ENCODE measurements at regions of chr9 and their contacts with region 1.

Region 1: DNA sequence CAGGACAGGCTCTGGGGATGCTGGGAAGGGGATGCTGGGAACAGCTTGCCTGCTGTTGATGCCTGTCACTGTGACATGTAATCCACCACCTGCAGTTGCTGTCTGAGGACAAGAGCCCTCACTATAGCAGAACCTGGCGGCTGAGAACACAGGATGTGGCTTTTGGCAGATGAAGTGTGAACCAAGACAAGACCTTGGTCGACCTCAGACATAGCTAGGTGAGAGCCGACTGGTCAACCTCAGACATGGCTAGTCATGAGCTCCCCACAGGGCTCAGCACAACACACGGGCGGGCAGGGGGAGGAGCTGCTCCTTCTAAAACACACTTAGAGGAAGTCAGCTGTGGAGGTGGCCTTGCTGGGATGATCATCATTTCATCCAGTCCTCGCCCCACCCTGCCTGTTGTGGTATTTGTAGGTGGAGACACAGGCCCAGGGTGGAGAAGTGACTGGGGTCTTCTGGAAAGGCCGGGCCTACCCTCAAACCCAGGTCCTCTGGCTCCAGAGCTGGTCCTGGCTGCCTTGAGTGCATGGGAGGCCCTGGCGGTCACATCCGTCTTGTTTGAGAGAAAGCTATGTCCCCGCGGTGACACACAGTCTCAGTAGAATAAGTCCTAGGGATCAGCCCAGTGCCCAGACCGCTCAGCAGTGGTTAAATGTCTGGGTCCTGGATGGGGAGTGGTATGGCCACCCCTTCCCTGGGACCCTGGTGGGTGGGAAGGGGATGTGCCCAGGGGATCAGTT is 6.1 kb downstream of the SUSD3 start:
- DNase-seq: peak; percentile 74 to 97 (median 86)
- ATAC-seq: peak; percentile 87
- H3K4me3 ChIP-seq: peak overlapping the region; percentile 45
- H3K4me3 Mint-ChIP-seq: peak overlapping the region; percentile 91
- H3K27ac ChIP-seq: peak overlapping the region; percentile 83 to 90
- H3K27ac Mint-ChIP-seq: peak overlapping the region; percentile 100
- H3K4me1 ChIP-seq: peaks cover 80% of the 10 kb centered on the region
- H3K4me1 Mint-ChIP-seq: peaks cover 96% of the 10 kb centered on the region
- H3K27me3 ChIP-seq: no peaks in the 10 kb centered on the region
- H3K27me3 Mint-ChIP-seq: no peaks in the 10 kb centered on the region
- CTCF ChIP-seq: no peak

Region 2: DNA sequence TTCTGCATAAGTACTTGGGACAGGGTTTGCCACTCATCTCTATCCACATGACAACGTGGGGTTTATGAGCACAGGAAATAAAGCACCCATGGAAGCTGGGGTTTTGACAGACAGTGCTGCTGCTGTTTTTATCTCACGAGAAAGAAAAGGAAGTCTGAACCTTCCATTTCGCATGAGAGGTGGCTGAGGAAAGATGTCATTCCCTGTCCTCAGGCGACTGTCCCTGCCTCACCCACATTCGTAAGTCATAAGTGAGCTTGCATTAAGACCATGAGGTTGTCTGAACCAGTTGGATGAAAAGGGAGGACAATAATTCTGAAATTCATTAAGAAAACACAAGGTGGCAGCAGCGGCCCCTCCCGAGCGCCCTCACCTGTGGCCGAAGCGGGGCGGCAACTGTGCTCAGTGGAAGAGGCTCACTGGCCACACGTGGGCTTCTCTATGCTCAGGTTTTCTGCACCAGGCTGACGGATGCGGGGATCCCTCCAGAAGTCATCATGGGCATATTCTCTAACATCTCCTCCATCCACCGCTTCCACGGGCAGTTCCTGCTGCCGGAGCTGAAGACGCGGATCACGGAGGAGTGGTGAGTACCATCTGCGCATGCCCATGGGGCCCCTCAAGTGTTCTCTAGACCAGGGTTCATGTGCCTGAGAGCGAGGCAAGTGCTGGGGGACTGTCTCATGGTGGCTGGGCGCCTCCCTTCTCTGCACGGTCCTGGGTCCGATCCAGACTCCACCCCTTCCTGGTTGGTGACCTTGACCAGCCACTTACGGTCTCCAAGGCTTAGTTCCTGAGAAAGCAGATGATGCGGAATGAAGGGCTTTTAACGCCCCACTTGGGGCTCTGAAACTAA is 60.8 kb before region 1 on chr9:
- CTCF ChIA-PET with region 1: interaction called, 5 read pairs
- POLR2A ChIA-PET with region 1: interaction called, 24 read pairs
- intact Hi-C with region 1: loop called in 1 of 2 experiments (anchors 1 kb)
- DNase-seq: peak; percentile 47 to 85 (median 56)
- ATAC-seq: peak; percentile 77
- H3K4me3 ChIP-seq: no peak overlapping the region
- H3K4me3 Mint-ChIP-seq: peak overlapping the region; percentile 71
- H3K27ac ChIP-seq: peak overlapping the region; percentile 7 to 63
- H3K27ac Mint-ChIP-seq: peak overlapping the region; percentile 88
- H3K4me1 ChIP-seq: peaks cover 48% of the 10 kb centered on the region
- H3K4me1 Mint-ChIP-seq: peaks cover 65% of the 10 kb centered on the region
- H3K27me3 ChIP-seq: no peaks in the 10 kb centered on the region
- H3K27me3 Mint-ChIP-seq: no peaks in the 10 kb centered on the region
- CTCF ChIP-seq: peak; percentile 79

Region 3: DNA sequence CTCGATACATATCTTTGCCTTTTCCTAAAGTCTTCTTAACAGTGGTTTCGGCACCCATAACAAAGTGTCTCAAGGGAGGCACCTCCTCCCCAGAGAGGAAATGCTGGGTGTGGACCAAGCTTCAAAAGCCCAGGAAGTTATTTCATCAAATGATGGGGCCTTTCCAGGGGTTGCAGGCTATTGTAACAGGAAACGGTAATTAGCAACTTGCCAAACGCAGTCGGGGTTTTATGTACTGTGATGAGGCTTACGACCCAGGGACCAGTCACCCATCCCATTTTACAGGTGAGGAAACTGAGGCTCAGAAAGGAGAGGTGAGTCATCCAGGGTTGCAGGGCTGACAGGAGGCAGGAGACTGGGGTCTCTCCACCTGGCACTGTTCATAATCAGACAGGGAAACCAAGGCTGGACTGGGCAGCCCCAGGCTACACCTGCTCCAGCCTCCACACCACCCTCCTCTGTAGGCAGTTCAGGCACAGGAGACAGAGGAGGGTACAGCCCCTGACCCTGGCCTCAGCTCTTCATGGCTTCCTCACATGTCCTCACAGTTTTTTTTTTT is 36.0 kb before region 1 on chr9:
- CTCF ChIA-PET with region 1: interaction called, 9 read pairs
- POLR2A ChIA-PET with region 1: interaction called, 163 read pairs
- intact Hi-C with region 1: loop called in 1 of 2 experiments (anchors 1 kb)
- DNase-seq: peak; percentile 54 to 94 (median 68)
- ATAC-seq: peak; percentile 85
- H3K4me3 ChIP-seq: peak overlapping the region; percentile 60
- H3K4me3 Mint-ChIP-seq: peak overlapping the region; percentile 91
- H3K27ac ChIP-seq: peak overlapping the region; percentile 92 to 95
- H3K27ac Mint-ChIP-seq: peak overlapping the region; percentile 99
- H3K4me1 ChIP-seq: peaks cover 99% of the 10 kb centered on the region
- H3K4me1 Mint-ChIP-seq: peaks cover 80% of the 10 kb centered on the region
- H3K27me3 ChIP-seq: no peaks in the 10 kb centered on the region
- H3K27me3 Mint-ChIP-seq: no peaks in the 10 kb centered on the region
- CTCF ChIP-seq: no peak

Region 4: DNA sequence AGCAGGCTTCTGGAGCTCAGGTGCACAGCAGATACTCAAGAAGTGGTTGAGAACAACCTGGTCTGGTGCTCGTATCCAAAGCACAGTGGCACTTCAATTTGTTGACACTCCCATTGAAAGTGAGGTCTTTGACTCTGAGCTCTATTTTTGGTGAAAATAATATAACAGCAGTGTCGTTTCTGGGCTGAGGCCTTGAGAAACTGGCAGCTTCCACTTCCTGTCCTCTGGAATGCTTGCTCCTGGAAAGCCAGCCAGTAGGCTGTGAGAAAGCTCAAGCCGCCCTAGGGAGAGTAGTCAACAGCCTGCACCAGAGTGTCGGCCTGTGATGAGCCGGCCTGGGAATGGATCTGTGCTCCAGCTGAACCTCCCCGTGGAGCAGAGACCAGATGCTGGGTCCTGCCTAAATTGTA is 12.9 kb before region 1 on chr9:
- CTCF ChIA-PET with region 1: interaction called, 4 read pairs
- POLR2A ChIA-PET with region 1: interaction called, 19 read pairs
- intact Hi-C with region 1: no loop called
- DNase-seq: no peak
- ATAC-seq: no peak
- H3K4me3 ChIP-seq: no peak overlapping the region
- H3K4me3 Mint-ChIP-seq: no peak overlapping the region
- H3K27ac ChIP-seq: no peak overlapping the region
- H3K27ac Mint-ChIP-seq: no peak overlapping the region
- H3K4me1 ChIP-seq: peaks cover 38% of the 10 kb centered on the region
- H3K4me1 Mint-ChIP-seq: peaks cover 32% of the 10 kb centered on the region
- H3K27me3 ChIP-seq: no peaks in the 10 kb centered on the region
- H3K27me3 Mint-ChIP-seq: no peaks in the 10 kb centered on the region
- CTCF ChIP-seq: no peak

Region 5: DNA sequence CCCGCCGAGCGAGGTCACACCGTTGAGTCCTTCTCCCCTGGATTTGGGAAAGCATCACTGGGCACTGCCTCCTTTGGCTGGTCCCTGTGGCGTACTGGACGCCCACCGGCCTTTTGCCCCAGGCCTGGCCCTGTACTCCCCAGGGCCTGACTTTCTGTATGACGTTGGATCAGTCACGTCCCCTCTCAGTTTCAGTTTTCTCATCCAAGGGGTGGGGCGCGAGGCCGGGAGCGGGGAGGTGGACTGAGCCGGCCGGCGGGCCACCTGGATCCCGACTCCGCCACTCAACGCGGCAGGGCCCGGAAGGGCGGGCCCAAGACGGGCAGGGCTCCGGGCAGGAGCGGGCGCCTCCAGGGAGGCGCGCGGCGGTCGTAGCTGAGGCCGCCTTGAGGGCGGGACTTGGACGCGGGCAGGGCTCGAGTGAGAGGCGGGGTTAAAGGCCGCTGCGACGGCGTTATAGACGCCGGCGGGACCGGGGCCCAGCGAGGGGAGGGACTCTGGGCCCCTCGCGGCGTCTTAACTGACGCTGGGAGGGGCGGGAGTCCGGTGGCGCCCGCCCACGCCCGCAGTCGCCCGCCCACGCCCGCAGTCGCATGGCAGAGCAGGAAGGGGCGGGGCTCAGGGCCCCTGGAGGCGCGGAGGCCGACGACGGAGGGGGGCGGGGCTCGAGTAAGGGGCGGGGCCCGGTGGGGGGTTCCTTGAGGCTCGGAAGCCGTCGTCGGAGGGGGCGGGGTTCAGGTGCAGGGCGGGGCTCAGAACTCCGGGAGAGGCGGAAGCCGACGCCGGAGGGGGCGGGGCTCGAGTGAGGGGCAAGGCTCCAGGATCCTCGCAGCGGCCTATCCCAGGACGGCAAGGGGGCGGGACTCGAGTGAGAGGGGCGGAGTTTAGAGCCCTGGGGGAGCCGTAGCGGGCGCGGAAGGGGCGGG is 30.9 kb after region 1 on chr9:
- CTCF ChIA-PET with region 1: interaction called, 4 read pairs
- POLR2A ChIA-PET with region 1: interaction called, 35 read pairs
- intact Hi-C with region 1: loop called (anchors 1 to 2 kb)
- DNase-seq: peak; percentile 100
- ATAC-seq: peak; percentile 81
- H3K4me3 ChIP-seq: peak overlapping the region; percentile 62
- H3K4me3 Mint-ChIP-seq: peak overlapping the region; percentile 95
- H3K27ac ChIP-seq: peak overlapping the region; percentile 94 to 95
- H3K27ac Mint-ChIP-seq: peak overlapping the region; percentile 99
- H3K4me1 ChIP-seq: peaks cover 75% of the 10 kb centered on the region
- H3K4me1 Mint-ChIP-seq: peaks cover 78% of the 10 kb centered on the region
- H3K27me3 ChIP-seq: no peaks in the 10 kb centered on the region
- H3K27me3 Mint-ChIP-seq: no peaks in the 10 kb centered on the region
- CTCF ChIP-seq: no peak

Region 6: DNA sequence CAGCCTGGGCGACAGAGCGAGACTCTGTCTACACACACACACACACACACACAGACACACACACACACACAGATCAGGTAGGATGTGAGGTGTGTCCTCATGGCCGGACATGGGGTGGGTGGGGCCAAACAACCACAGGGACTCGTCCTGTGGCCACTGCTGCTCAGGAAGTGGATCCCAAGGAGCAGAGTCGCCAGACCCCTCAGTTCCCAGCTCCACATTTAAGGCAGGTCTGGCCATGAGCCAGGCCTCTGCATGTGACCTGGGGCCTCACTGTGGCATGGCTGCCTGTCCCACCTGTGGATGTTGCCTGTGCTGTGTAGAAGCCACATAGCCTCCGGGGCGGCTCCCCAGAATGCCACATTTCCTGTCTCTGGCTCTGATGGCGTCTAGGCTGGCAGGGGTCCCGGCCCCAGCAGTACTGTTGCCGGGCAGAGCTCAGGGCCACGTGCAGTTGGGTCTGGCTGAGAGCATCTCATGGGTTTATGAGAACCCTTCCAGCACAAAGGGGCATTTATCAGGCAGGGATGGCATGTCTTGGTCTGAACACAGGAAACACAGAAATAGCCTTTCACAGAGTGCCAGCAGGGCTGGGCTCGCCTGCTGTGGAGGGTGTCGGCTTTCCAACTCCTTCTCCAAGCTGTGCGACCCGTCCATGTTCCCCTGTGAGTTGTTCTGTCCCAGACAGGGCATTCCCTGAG is 79.4 kb after region 1 on chr9:
- CTCF ChIA-PET with region 1: no interaction called
- POLR2A ChIA-PET with region 1: interaction called, 13 read pairs
- intact Hi-C with region 1: no loop called
- DNase-seq: peak; percentile 55 to 88 (median 68)
- ATAC-seq: peak; percentile 95
- H3K4me3 ChIP-seq: no peak overlapping the region
- H3K4me3 Mint-ChIP-seq: peak overlapping the region; percentile 72
- H3K27ac ChIP-seq: peak overlapping the region; percentile 72 to 80
- H3K27ac Mint-ChIP-seq: peak overlapping the region; percentile 98
- H3K4me1 ChIP-seq: peaks cover 56% of the 10 kb centered on the region
- H3K4me1 Mint-ChIP-seq: peaks cover 50% of the 10 kb centered on the region
- H3K27me3 ChIP-seq: no peaks in the 10 kb centered on the region
- H3K27me3 Mint-ChIP-seq: no peaks in the 10 kb centered on the region
- CTCF ChIP-seq: no peak